GM13976 (cell line): ENCODE measurements at regions of chr17 and their contacts with region 1.

Region 1: GRCh38 chr17:34156741-34157589 is 98.1 kb upstream of the CCL2 start:
- DNase-seq: no peak
- CTCF ChIP-seq: no peak

Region 2: GRCh38 chr17:33927732-33928133 is 229.2 kb before region 1 on chr17:
- in situ Hi-C with region 1: loop called (anchors 10 kb)
- DNase-seq: peak; percentile 41
- CTCF ChIP-seq: no peak